ENCODE measurements at regions of chr9 and their contacts with region 1.

Region 1: DNA sequence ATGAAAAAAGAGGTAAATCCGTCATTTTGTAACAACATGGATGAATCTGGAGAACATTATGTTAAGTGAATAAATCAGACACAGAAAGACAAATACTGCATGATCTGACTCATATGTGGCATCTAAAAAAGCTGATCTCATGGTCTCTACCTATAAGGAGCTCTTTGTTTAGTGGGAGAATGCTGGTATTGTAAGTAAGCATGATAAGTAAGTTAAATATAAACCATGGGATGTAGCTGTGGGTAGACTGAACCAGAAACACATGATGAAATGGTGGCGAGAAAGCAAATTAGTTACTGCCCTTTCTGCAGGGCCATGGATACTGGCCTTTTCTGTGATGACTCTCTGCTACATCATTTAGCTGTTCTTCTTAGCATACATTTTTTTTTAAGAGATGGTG is 66.4 kb upstream of the RUSC2 start:
- DNase-seq: no peak
- ATAC-seq: no peak
- H3K4me3 ChIP-seq: no peak overlapping the region
- H3K27ac ChIP-seq: no peak overlapping the region
- H3K4me1 ChIP-seq: no peaks in the 10 kb centered on the region
- H3K27me3 ChIP-seq: no peaks in the 10 kb centered on the region
- CTCF ChIP-seq: no peak

Region 2: GRCh38 chr9:35436933-35437332 is 13.4 kb after region 1 on chr9:
- intact Hi-C with region 1: loop called in 1 of 10 experiments (anchors 1 kb)
- DNase-seq: no peak
- ATAC-seq: no peak
- H3K4me3 ChIP-seq: no peak overlapping the region
- H3K27ac ChIP-seq: no peak overlapping the region
- H3K4me1 ChIP-seq: no peaks in the 10 kb centered on the region
- H3K27me3 ChIP-seq: no peaks in the 10 kb centered on the region
- CTCF ChIP-seq: no peak

Region 3: DNA sequence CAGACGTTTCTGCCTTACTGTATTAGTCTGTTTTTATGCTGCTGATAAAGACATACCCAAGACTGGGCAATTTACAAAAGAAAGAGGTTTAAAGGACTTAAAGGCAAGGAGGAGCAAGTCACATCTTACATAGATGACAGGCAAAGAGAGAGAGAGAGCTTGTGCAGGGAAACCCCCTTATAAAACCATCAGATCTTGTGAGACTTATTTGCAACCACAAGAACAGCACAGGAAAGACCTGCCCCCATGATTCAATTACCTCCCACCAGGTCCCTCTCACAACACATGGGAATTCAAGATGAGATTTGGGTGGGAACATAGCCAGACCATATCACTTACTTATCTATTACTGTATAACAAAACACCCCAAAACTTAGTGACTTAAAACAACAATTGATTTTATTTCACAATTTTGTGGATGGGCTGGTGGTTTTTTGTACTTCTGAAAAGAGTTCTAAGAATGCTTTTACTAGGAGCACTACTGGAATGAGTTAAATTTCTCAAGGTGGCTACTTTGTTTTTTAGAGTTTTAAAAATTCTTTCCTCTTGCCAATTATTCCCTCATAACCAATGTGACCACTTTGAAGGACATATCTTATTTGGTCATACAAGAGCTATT is 76.7 kb after region 1 on chr9:
- intact Hi-C with region 1: no loop called
- DNase-seq: no peak
- ATAC-seq: no peak
- H3K4me3 ChIP-seq: no peak overlapping the region
- H3K27ac ChIP-seq: peak overlapping the region in 3 of 10 donors; percentile 24 to 73 (median 54)
- H3K4me1 ChIP-seq: peaks cover 2 to 65% (median 35%) of the 10 kb centered on the region in 9 donors
- H3K27me3 ChIP-seq: no peaks in the 10 kb centered on the region
- CTCF ChIP-seq: no peak

Measured in heart right ventricle (tissue), 16 donors.